HEK293 (cell line): ENCODE measurements at regions of chr5 and their contacts with region 1.

Region 1: GRCh38 chr5:172667786-172668591 is 26.9 kb downstream of the NEURL1B start:
- H3K4me3 ChIP-seq: no peak overlapping the region
- H3K27ac ChIP-seq: no peak overlapping the region
- H3K4me1 ChIP-seq: no peaks in the 10 kb centered on the region
- CTCF ChIP-seq: no peak

Region 2: GRCh38 chr5:172646716-172647285 is 21.2 kb before region 1 on chr5:
- CTCF ChIA-PET with region 1: interaction called, 12 read pairs
- POLR2A ChIA-PET with region 1: no interaction called
- H3K4me3 ChIP-seq: no peak overlapping the region
- H3K27ac ChIP-seq: no peak overlapping the region
- H3K4me1 ChIP-seq: peaks cover 7% of the 10 kb centered on the region
- CTCF ChIP-seq: no peak; the same call in 1 of the 2 replicates

Region 3: GRCh38 chr5:172724242-172725183 is 56.5 kb after region 1 on chr5:
- CTCF ChIA-PET with region 1: no interaction called
- POLR2A ChIA-PET with region 1: no interaction called
- H3K4me3 ChIP-seq: no peak overlapping the region
- H3K27ac ChIP-seq: no peak overlapping the region
- H3K4me1 ChIP-seq: peaks cover 8% of the 10 kb centered on the region; the same call in 1 of the 2 replicates
- CTCF ChIP-seq: no peak

Region 4: DNA sequence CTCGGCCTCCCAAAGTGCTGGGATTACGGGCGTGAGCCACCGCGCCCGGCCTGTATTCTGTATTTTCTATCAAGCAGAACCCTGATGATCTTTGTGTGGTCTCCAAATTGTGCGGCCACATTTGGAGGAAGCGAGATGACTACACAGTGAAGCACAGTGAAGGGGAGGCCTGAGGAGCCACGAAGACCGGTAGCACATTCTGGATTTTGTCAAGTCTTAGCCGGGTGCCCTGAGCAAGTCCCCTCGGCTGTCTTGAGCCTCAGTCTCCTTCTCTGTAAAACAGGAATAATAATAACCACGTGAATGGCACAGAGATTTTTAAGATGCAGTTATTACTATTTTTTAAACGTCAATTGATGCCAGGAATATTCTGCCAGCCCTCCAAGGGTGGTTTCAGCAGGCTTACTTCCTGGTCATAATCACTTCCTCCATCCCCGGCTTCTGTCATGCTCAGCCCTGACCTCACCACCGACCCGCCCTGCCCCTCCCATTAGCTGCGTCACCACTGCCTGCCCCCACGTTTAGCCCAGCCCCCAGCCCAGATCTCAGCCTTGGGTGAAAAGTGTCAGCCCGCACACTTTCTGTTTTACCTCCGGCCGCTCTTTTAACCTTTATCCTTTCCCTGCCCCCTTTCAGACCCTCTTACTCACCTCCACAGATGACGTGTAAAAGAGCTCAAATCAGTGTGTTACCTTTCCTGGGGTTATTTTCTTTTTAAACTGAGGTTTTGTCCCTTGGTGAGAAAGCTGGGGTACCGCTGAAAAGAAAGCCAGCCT is 139.1 kb after region 1 on chr5:
- CTCF ChIA-PET with region 1: no interaction called
- POLR2A ChIA-PET with region 1: no interaction called
- H3K4me3 ChIP-seq: no peak overlapping the region
- H3K27ac ChIP-seq: no peak overlapping the region
- H3K4me1 ChIP-seq: no peaks in the 10 kb centered on the region
- CTCF ChIP-seq: no peak